Prostate gland (tissue), 2 donors: ENCODE measurements at regions of chr3 and their contacts with region 1.

Region 1: GRCh38 chr3:42880601-42881451 is 5.1 kb upstream of the CYP8B1 start:
- DNase-seq: peak; percentile 80
- H3K4me3 ChIP-seq: peak overlapping the region; percentile 58 to 59
- H3K27ac ChIP-seq: peak overlapping the region; percentile 67 to 73
- H3K4me1 ChIP-seq: no peaks in the 10 kb centered on the region
- H3K27me3 ChIP-seq: no peaks in the 10 kb centered on the region
- CTCF ChIP-seq: peak; percentile 73 to 94 (median 90)
- POLR2A ChIP-seq: no peak

Region 2: DNA sequence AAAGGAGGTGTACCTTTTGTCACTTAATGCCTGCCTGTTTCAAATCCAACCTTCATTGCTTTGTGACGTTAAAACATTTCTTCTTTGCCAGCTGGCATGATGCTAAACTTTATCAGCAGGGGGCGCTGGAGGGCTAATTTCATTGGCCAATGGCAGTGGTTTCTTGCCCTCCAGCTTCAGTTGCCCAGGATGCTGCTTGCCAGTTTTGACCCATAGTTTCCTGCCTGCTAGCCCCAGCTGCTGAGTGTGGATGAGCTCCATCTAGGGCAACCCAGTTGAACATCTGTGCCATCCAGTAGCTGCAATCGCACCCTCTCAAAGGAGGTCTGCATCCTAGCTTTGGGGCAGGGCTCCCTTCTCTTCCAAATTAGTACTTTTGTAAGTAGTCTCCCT is 49.5 kb before region 1 on chr3:
- intact Hi-C with region 1: loop called (anchors 2 kb)
- DNase-seq: peak; percentile 47
- H3K4me3 ChIP-seq: no peak overlapping the region
- H3K27ac ChIP-seq: no peak overlapping the region
- H3K4me1 ChIP-seq: no peaks in the 10 kb centered on the region
- H3K27me3 ChIP-seq: no peaks in the 10 kb centered on the region
- CTCF ChIP-seq: peak; percentile 26 to 67 (median 64)
- POLR2A ChIP-seq: no peak

Region 3: GRCh38 chr3:42839616-42840015 is 41.2 kb before region 1 on chr3:
- intact Hi-C with region 1: loop called (anchors 2 kb)
- DNase-seq: peak; percentile 57
- H3K4me3 ChIP-seq: no peak overlapping the region
- H3K27ac ChIP-seq: no peak overlapping the region
- H3K4me1 ChIP-seq: no peaks in the 10 kb centered on the region
- H3K27me3 ChIP-seq: no peaks in the 10 kb centered on the region
- CTCF ChIP-seq: peak; percentile 61 to 92 (median 80)
- POLR2A ChIP-seq: no peak

Region 4: DNA sequence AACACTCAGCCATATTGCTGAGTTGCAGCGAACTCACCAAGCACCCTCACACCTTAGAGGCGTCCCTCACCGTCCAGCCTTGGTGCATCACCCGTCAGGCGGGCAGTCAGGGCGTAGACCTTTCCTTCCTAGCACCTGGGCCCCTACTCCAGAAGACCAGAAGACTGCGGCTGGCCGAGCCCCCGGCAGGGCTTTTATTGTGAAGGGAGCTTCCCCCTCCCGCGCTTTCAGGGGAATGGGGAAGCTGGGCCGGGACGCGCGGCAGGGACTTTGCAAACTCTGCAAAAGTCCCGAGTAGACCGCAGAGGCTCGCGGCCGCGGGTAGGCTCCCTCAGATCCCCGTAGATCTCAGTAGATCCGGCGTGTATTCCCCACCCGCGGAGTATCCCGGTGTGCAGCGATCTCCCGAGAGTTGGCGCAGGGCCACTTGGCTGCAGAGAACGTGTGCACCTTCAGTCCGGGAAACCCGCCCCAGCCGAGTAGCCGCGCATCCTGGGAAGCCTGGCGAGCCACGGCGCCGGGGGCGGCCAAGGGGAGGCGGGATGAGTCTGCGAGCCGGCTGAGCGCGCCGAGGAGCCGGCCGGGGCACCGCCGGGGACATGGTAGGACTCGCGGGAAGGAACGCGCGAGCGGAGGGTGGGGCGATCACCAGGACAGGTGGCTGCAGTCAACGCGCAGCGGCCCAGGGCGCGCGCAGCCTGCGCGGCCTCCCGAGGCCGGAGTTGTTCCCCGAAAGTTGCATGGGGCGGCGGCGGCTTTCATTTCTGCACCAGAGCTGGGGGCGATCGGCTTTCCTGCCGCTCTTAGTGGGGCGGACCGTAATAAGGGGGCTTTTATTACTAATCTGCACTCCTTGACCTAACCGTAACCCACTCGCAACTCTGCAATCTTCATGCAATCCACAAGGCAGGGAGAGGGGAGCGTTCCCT is 98.5 kb after region 1 on chr3 and contains the start of gene GASK1A:
- intact Hi-C with region 1: no loop called
- DNase-seq: peak; percentile 20
- H3K4me3 ChIP-seq: peak within 1 kb of the TSS; percentile 55 to 56
- H3K27ac ChIP-seq: peak within 1 kb of the TSS; percentile 53 to 59
- H3K4me1 ChIP-seq: no peaks in the 10 kb centered on the region
- H3K27me3 ChIP-seq: peaks cover 3% of the 10 kb centered on the region
- CTCF ChIP-seq: no peak
- POLR2A ChIP-seq: no peak
- total RNA-seq, gene GASK1A: 4.7 to 17.5 TPM